Stomach (tissue), 19 donors: ENCODE measurements at regions of chr16 and their contacts with region 1.

Region 1: DNA sequence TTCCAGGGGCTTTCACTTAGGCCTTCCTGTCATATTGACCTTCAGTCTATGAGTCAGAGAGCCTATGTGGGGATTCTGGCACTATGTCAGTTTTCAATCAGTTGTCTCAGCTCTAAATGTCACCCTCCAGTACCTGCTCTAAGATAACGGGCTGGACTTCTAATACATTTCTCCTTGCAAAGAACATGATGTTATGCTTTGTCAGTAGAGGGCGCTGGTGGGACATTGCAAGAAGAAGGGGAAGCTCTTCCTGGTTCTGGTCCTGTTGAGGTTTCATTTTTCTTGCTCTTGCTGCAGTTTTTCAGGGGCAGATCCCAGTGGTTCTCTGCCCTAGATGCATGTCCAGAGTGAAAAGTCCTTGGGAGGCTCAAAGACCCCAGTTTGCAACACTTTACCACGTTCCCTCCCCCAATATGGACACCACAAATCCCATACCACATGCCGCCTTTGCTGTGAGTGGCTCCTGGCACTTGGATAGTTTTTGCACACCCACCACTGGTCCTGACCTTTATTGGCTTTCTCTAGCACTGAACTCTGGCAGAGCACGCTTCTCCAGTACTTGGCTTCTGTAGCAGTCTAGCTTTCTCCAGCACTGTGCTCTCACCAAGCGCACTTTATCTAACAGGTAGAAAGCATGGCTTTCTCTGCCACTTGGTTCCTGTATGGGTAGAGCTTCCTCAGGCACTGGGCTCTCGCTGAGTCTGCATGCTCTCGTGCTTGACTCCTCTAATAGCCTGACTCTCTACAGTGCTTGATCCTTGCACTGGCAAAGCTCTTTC is 49.0 kb downstream of the BCL7C start:
- DNase-seq: peak; percentile 70 to 95
- H3K4me3 ChIP-seq: peak overlapping the region in 3 of 4 donors; percentile 23 to 24 (median 24)
- H3K27ac ChIP-seq: peak overlapping the region; percentile 25 to 80 (median 61)
- H3K4me1 ChIP-seq: peaks cover 8 to 22% (median 16%) of the 10 kb centered on the region in 4 donors
- H3K27me3 ChIP-seq: no peaks in the 10 kb centered on the region
- CTCF ChIP-seq: peak in 5 of 7 experiments; percentile 69 to 89 (median 82)
- EP300 ChIP-seq: no peak
- POLR2A ChIP-seq: no peak

Region 2: GRCh38 chr16:30786936-30787612 is 57.8 kb before region 1 on chr16 and contains the start of gene ZNF629:
- intact Hi-C with region 1: loop called (anchors 10 kb)
- DNase-seq: peak; percentile 71 to 91
- H3K4me3 ChIP-seq: peak within 1 kb of the TSS; percentile 83 to 99 (median 92)
- H3K27ac ChIP-seq: peak within 1 kb of the TSS; percentile 82 to 93 (median 91)
- H3K4me1 ChIP-seq: peaks cover 11 to 40% (median 27%) of the 10 kb centered on the region in 4 donors
- H3K27me3 ChIP-seq: no peaks in the 10 kb centered on the region
- CTCF ChIP-seq: no peak
- EP300 ChIP-seq: no peak
- POLR2A ChIP-seq: peak in 1 of 4 donors; percentile 11
- total RNA-seq, gene ZNF629: 10.7 to 21.3 (median 18.3) TPM

Region 3: GRCh38 chr16:30893744-30894539 is 49.1 kb after region 1 on chr16 and contains the start of gene BCL7C:
- intact Hi-C with region 1: loop called (anchors 10 kb)
- DNase-seq: peak; percentile 94 to 98
- H3K4me3 ChIP-seq: peak within 1 kb of the TSS; percentile 61 to 80 (median 74)
- H3K27ac ChIP-seq: peak within 1 kb of the TSS; percentile 85 to 99 (median 97)
- H3K4me1 ChIP-seq: peaks cover 44 to 67% (median 60%) of the 10 kb centered on the region in 4 donors
- H3K27me3 ChIP-seq: no peaks in the 10 kb centered on the region
- CTCF ChIP-seq: peak in 4 of 7 experiments; percentile 19 to 63 (median 32)
- EP300 ChIP-seq: no peak
- POLR2A ChIP-seq: no peak
- total RNA-seq, gene BCL7C: 12.2 to 44.6 (median 21.6) TPM